Ascending aorta (tissue), 2 donors: ENCODE measurements at regions of chr6 and their contacts with region 1.

Region 1: DNA sequence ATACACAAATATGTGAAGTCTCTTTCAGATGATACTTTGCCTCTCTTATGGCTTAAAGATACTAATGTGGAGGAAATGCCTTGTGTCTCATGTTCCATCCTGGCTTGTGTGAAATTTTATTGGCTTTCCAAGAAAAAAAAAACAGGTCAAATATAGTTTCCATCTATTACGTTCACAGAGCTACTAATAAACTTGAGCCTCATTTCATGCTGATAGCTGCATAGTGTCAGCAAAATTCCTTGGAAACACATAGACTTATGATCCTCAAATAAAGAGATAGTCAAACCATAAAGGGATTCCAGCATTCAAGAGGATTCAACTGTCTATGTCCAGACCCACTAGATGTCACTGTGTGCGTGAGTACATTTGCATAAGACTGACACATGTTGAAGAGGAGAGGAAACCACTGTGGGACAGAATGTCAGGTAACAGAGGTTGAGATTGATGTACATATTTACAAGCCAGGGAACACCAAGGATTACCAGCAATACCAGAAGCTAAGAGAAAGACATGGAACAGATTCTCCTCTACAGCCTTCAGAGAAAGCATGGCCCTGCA is 266.6 kb downstream of the COL12A1 start:
- DNase-seq: no peak
- H3K4me3 ChIP-seq: no peak overlapping the region
- H3K27ac ChIP-seq: no peak overlapping the region
- H3K4me1 ChIP-seq: no peaks in the 10 kb centered on the region
- H3K27me3 ChIP-seq: no peaks in the 10 kb centered on the region
- CTCF ChIP-seq: no peak

Region 2: GRCh38 chr6:75098709-75099108 is 159.5 kb after region 1 on chr6:
- intact Hi-C with region 1: loop called (anchors 10 kb)
- DNase-seq: peak; percentile 10 to 85
- H3K4me3 ChIP-seq: no peak overlapping the region
- H3K27ac ChIP-seq: peak overlapping the region; percentile 38 to 65
- H3K4me1 ChIP-seq: peaks cover 3 to 17% of the 10 kb centered on the region in 2 donors
- H3K27me3 ChIP-seq: no peaks in the 10 kb centered on the region
- CTCF ChIP-seq: no peak